B cell (primary cell): ENCODE measurements at regions of chr11 and their contacts with region 1.

Region 1: DNA sequence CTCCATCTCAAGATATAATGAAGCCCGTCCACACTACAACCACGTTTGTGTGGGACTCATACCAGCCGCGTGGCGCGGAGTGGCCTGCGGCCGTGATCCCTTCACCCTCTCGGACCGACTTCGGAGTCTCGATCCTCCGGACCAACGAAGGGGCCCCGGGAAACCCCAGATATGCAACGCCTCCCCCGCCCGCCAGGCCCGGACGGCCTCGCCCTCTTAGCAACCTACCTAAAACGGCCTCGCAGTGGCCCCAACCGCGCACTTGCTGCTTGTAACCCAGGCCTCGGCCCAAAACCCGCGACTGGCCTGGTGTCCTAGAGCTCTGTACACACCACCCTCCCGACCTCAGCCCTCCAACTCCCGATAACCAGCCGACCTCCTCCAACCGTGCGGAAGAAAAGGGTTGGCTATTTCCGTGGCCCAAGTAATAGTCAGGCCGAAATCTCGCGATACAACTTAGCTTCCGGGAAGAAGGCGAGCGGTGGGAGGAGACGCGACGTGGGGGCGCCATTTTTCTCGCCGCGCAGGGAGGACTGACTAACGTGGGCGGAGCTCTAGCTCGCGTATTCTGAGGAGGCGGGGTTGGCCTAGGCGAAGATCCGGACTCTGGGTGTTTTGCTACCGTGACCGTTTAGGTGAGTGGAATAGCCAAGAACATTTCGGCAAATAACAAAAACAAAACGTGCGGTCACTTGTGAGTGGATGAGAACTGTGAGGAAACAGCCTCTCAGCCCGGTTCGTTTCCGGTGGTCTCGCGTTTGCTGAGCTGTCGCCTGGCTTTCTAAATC is at the starts of genes C11orf54 and TAF1D:
- DNase-seq: peak; percentile 99
- ATAC-seq: peak; percentile 95
- H3K4me3 ChIP-seq: peak within 1 kb of the TSS; percentile 73 to 98 (median 92)
- H3K4me3 Mint-ChIP-seq: peak within 1 kb of the TSS; percentile 98
- H3K27ac ChIP-seq: peak within 1 kb of the TSS; percentile 90 to 96
- H3K27ac Mint-ChIP-seq: peak within 1 kb of the TSS; percentile 98
- H3K4me1 ChIP-seq: peaks cover 36 to 39% of the 10 kb centered on the region in 2 donors
- H3K4me1 Mint-ChIP-seq: peaks cover 63% of the 10 kb centered on the region
- H3K27me3 ChIP-seq: no peaks in the 10 kb centered on the region
- H3K27me3 Mint-ChIP-seq: no peaks in the 10 kb centered on the region
- CTCF ChIP-seq: no peak
- total RNA-seq, gene C11orf54: 38.9 and 40.3 TPM in 2 replicates
- total RNA-seq, gene TAF1D: 230 and 235 TPM in 2 replicates

Region 2: DNA sequence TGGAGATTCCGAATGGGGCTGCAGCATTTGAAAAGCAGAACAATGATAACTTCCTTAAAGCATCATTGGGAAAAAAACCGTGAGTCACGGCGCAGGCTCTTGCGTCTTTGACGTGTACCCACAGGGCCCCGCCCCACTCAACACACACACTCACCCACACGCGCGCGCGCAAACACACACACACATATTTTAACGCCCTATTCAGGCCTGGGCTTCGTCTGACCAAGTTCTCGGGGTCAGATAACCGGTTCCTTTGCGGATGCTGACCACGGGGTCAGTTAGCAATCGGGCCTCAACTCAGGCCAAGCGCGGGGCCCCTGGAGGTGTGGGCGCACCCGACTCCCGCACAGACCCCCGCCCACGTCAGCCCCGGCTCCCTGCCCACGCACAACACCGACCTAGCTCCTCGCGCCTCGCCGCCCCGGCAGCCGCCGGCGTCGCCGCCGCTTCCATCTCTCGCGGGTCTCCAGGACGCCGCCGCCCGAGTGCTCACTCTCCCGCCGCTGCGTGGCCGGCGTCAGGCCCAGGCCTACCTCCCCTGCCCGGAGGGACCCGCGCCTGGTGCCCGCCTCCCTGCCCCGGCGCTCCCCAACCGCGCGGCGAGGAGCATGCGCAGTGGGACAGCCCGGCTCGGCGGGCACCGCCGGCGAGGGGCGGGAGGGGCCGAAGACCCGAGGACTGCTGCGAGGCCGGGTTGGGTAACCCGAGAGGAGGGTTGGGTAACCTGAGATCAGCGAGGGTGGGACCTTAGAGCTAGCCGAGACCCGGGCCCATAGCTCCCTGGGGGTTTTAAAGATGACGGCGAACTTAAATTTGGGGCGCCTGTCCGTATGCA is 543.7 kb before region 1 on chr11 and contains the start of gene SLC36A4:
- CTCF ChIA-PET with region 1: no interaction called
- POLR2A ChIA-PET with region 1: no interaction called
- intact Hi-C with region 1: loop called (anchors 10 kb)
- DNase-seq: peak; percentile 94
- ATAC-seq: peak; percentile 85
- H3K4me3 ChIP-seq: peak within 1 kb of the TSS; percentile 67 to 99 (median 77)
- H3K4me3 Mint-ChIP-seq: peak within 1 kb of the TSS; percentile 96
- H3K27ac ChIP-seq: peak within 1 kb of the TSS; percentile 90 to 97
- H3K27ac Mint-ChIP-seq: peak within 1 kb of the TSS; percentile 96
- H3K4me1 ChIP-seq: peaks cover 7% of the 10 kb centered on the region in 2 donors
- H3K4me1 Mint-ChIP-seq: peaks cover 18% of the 10 kb centered on the region
- H3K27me3 ChIP-seq: peaks cover 0 to 7% (median 0%) of the 10 kb centered on the region in 4 experiments
- H3K27me3 Mint-ChIP-seq: peaks cover 10% of the 10 kb centered on the region
- CTCF ChIP-seq: no peak
- total RNA-seq, gene SLC36A4: 27.5 and 28.2 TPM in 2 replicates

Region 3: GRCh38 chr11:93718057-93718563 is 23.2 kb before region 1 on chr11:
- CTCF ChIA-PET with region 1: interaction called, 14 read pairs
- POLR2A ChIA-PET with region 1: interaction called, 19 read pairs
- intact Hi-C with region 1: loop called (anchors 1 kb)
- DNase-seq: peak; percentile 88
- ATAC-seq: peak; percentile 95
- H3K4me3 ChIP-seq: peak overlapping the region in 3 of 5 experiments; percentile 1 to 43 (median 21)
- H3K4me3 Mint-ChIP-seq: peak overlapping the region; percentile 61
- H3K27ac ChIP-seq: peak overlapping the region; percentile 81 to 92
- H3K27ac Mint-ChIP-seq: peak overlapping the region; percentile 86
- H3K4me1 ChIP-seq: peaks cover 26 to 27% of the 10 kb centered on the region in 2 donors
- H3K4me1 Mint-ChIP-seq: peaks cover 36% of the 10 kb centered on the region
- H3K27me3 ChIP-seq: no peaks in the 10 kb centered on the region
- H3K27me3 Mint-ChIP-seq: no peaks in the 10 kb centered on the region
- CTCF ChIP-seq: no peak

Region 4: DNA sequence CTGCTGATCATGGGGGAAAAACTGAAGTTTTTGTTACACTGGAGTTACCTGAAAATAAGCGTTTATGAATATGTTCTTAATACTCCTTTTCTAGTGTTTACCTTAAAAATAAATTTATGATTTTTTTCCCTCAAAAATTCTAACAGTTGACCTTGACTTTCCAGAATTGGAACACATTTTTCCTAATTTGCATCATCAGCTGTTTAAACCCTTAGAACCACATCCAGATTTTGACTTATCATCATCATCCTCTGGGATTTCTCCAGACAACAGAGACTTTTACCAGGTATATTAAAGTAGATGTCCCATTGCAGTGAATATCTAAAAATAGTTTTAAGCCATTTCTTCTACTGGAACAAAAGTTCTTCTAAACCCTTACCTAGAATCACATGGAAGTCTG is 17.2 kb before region 1 on chr11:
- CTCF ChIA-PET with region 1: interaction called, 8 read pairs
- POLR2A ChIA-PET with region 1: interaction called, 19 read pairs
- intact Hi-C with region 1: no loop called
- DNase-seq: no peak
- ATAC-seq: no peak
- H3K4me3 ChIP-seq: no peak overlapping the region
- H3K4me3 Mint-ChIP-seq: no peak overlapping the region
- H3K27ac ChIP-seq: peak overlapping the region in 1 of 2 donors; percentile 48
- H3K27ac Mint-ChIP-seq: peak overlapping the region; percentile 68
- H3K4me1 ChIP-seq: peaks cover 4 to 6% of the 10 kb centered on the region in 2 donors
- H3K4me1 Mint-ChIP-seq: peaks cover 9% of the 10 kb centered on the region
- H3K27me3 ChIP-seq: no peaks in the 10 kb centered on the region
- H3K27me3 Mint-ChIP-seq: no peaks in the 10 kb centered on the region
- CTCF ChIP-seq: no peak